Caco-2 (cell line): ENCODE measurements at regions of chr20 and their contacts with region 1.

Region 1: GRCh38 chr20:10673988-10674711 is at the start of gene JAG1:
- DNase-seq: peak; percentile 98 to 99
- H3K4me3 ChIP-seq: peak within 1 kb of the TSS; percentile 97
- H3K4me3 Mint-ChIP-seq: peak within 1 kb of the TSS; percentile 100
- H3K27ac Mint-ChIP-seq: peak within 1 kb of the TSS; percentile 98
- H3K4me1 ChIP-seq: peaks cover under 1% of the 10 kb centered on the region; the same call in 1 of the 2 replicates
- H3K4me1 Mint-ChIP-seq: peaks cover 14% of the 10 kb centered on the region
- H3K27me3 ChIP-seq: no peaks in the 10 kb centered on the region
- H3K27me3 Mint-ChIP-seq: peaks cover 2% of the 10 kb centered on the region
- CTCF ChIP-seq: no peak
- total RNA-seq, gene JAG1: 69.1 and 69.8 TPM in 2 replicates

Region 2: GRCh38 chr20:10434832-10435812 is 239.0 kb before region 1 on chr20 and contains the start of gene SLX4IP:
- CTCF ChIA-PET with region 1: no interaction called
- POLR2A ChIA-PET with region 1: no interaction called
- intact Hi-C with region 1: loop called (anchors 1 kb)
- DNase-seq: peak; percentile 94 to 97
- H3K4me3 ChIP-seq: peak within 1 kb of the TSS; percentile 98
- H3K4me3 Mint-ChIP-seq: peak within 1 kb of the TSS; percentile 99
- H3K27ac Mint-ChIP-seq: peak within 1 kb of the TSS; percentile 97
- H3K4me1 ChIP-seq: peaks cover 3% of the 10 kb centered on the region; the same call in 1 of the 2 replicates
- H3K4me1 Mint-ChIP-seq: peaks cover 10% of the 10 kb centered on the region
- H3K27me3 ChIP-seq: no peaks in the 10 kb centered on the region
- H3K27me3 Mint-ChIP-seq: no peaks in the 10 kb centered on the region
- CTCF ChIP-seq: no peak
- total RNA-seq, gene SLX4IP: 8.5 and 8.8 TPM in 2 replicates

Region 3: DNA sequence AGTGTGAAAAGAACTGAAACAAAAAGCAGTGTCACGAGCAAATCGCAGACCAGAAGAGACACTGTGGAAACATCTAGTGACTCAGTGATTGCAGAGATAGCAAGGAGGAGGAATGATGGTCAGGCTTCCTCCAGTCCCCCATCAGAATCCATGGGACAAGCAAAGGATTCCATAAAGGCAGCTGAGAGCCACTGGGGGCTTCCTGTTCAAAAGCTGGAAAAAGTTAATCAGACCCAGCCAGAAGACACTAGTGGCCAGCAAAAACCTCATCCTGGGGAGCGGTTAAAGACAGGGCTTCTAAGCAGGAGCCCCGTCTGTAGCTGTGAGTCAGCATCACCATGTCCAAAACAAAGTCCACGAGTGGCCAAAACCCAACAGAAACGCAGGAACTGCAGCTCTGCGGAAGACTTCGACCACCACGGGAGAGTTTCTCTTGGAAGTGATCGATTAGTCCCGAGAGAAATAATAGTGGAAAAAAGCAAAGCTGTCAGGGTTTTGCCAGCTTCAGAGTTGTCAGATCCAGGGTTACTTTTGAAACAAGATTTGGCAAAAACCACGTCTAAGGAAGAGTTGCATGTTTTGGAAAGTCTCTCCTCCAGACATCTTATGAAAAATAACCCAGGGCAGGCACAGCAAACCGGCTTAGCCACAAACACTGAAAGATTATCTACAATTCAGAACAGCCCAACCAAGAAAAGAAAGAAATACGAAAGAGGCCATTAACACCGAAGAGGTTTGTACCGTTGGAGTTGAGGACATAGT is 51.3 kb before region 1 on chr20:
- CTCF ChIA-PET with region 1: no interaction called
- POLR2A ChIA-PET with region 1: no interaction called
- intact Hi-C with region 1: no loop called
- DNase-seq: no peak
- H3K4me3 ChIP-seq: no peak overlapping the region
- H3K4me3 Mint-ChIP-seq: no peak overlapping the region
- H3K27ac Mint-ChIP-seq: no peak overlapping the region
- H3K4me1 ChIP-seq: no peaks in the 10 kb centered on the region
- H3K4me1 Mint-ChIP-seq: no peaks in the 10 kb centered on the region
- H3K27me3 ChIP-seq: no peaks in the 10 kb centered on the region
- H3K27me3 Mint-ChIP-seq: no peaks in the 10 kb centered on the region
- CTCF ChIP-seq: no peak

Region 4: DNA sequence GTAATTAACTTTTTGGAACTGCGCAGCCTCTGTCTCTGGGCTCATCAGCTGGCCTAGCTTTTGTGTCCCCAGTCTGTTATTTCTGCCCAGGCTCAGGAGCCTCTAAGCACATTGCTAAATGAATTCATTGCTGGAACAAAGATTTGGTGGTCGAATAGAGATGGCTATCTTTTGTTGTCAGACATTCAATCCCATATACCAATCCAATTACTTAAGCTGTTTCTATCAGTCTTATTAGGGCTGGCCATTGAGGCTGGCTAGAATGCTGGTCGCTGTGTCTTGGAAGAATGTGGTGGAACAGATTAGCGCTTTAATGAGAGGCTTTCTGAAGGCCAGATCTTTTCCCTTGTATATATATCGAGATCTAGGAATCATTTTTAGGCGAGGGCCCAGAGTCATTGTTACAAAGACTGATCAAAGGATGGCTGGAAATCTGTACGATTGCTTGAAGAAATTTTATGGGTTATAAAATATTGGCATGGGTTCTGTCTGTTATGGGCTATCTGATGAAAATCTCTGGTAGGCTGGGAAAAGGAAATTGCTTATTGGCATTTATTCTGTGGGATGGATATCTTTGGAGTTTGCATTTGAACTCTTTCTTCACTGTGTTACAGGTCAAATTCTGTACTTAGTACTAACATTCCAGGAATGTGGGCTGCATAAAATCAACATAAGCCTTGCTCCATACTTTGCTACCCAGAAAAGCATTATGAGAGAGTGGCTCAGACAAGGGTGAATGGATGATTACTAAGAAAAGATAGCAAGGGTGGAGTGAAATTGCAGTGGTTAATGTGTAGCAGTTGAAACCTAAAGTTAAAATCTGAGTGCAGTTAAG is 34.4 kb after region 1 on chr20:
- CTCF ChIA-PET with region 1: interaction called, 4 read pairs
- POLR2A ChIA-PET with region 1: interaction called, 3 read pairs
- intact Hi-C with region 1: loop called (anchors 1 kb)
- DNase-seq: peak in 1 of 2 experiments; percentile 55
- H3K4me3 ChIP-seq: no peak overlapping the region
- H3K4me3 Mint-ChIP-seq: peak overlapping the region; percentile 31
- H3K27ac Mint-ChIP-seq: peak overlapping the region; percentile 58
- H3K4me1 ChIP-seq: peaks cover 42% of the 10 kb centered on the region
- H3K4me1 Mint-ChIP-seq: peaks cover 30% of the 10 kb centered on the region
- H3K27me3 ChIP-seq: no peaks in the 10 kb centered on the region
- H3K27me3 Mint-ChIP-seq: no peaks in the 10 kb centered on the region
- CTCF ChIP-seq: no peak

Region 5: GRCh38 chr20:10864076-10864918 is 190.1 kb after region 1 on chr20:
- CTCF ChIA-PET with region 1: no interaction called
- POLR2A ChIA-PET with region 1: no interaction called
- intact Hi-C with region 1: no loop called
- DNase-seq: no peak
- H3K4me3 ChIP-seq: no peak overlapping the region
- H3K4me3 Mint-ChIP-seq: no peak overlapping the region
- H3K27ac Mint-ChIP-seq: peak overlapping the region; percentile 13
- H3K4me1 ChIP-seq: peaks cover 27% of the 10 kb centered on the region
- H3K4me1 Mint-ChIP-seq: no peaks in the 10 kb centered on the region
- H3K27me3 ChIP-seq: no peaks in the 10 kb centered on the region
- H3K27me3 Mint-ChIP-seq: no peaks in the 10 kb centered on the region
- CTCF ChIP-seq: no peak

Region 6: GRCh38 chr20:10954137-10954840 is 280.1 kb after region 1 on chr20:
- CTCF ChIA-PET with region 1: interaction called, 4 read pairs
- POLR2A ChIA-PET with region 1: no interaction called
- intact Hi-C with region 1: loop called (anchors 2 kb)
- DNase-seq: no peak
- H3K4me3 ChIP-seq: no peak overlapping the region
- H3K4me3 Mint-ChIP-seq: no peak overlapping the region
- H3K27ac Mint-ChIP-seq: no peak overlapping the region
- H3K4me1 ChIP-seq: peaks cover 50% of the 10 kb centered on the region
- H3K4me1 Mint-ChIP-seq: peaks cover 31% of the 10 kb centered on the region
- H3K27me3 ChIP-seq: no peaks in the 10 kb centered on the region
- H3K27me3 Mint-ChIP-seq: no peaks in the 10 kb centered on the region
- CTCF ChIP-seq: no peak

Region 7: DNA sequence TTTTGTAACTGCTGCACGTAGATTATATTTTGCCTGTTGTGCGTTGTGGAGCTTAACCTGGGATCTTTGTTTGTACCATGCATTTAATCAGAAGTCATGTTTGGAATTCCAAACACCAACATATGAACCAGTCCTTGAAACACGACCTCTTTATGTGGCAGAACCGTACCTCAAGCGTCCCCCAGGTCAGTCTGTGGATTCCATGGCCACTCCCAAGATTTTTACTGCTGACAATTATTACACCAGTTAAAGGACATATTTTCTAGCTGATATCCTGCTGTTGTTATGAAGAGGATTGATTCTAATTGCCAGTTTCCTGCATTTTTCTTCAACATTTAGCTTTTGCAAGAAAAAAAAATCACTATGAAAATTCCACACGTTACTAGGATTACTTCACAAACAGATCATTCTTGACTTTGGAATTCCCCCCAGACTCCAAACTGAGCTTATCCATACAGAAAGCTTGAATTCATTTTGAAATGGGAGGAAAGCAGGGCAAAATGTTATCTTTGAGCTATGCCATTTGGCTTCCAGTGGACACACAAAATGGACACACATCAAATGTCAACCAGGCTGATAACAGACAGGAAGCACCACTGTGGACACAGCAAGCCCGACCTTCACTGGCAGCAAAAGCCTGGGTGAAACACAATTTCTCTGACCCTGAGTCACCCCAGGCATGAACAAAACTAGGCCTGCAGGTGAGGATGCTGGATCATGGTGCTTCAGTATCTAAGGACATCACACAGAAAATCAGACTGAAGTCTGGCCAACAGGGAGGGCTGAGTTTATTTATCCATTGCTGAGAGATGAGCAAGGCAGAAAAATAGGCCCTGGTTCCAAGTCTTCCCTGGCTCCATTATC is 542.5 kb after region 1 on chr20:
- CTCF ChIA-PET with region 1: interaction called, 4 read pairs
- POLR2A ChIA-PET with region 1: no interaction called
- intact Hi-C with region 1: loop called (anchors 1 kb)
- DNase-seq: peak; percentile 58 to 86
- H3K4me3 ChIP-seq: no peak overlapping the region
- H3K4me3 Mint-ChIP-seq: peak overlapping the region; percentile 36
- H3K27ac Mint-ChIP-seq: peak overlapping the region; percentile 74
- H3K4me1 ChIP-seq: peaks cover 53% of the 10 kb centered on the region
- H3K4me1 Mint-ChIP-seq: peaks cover 38% of the 10 kb centered on the region
- H3K27me3 ChIP-seq: no peaks in the 10 kb centered on the region
- H3K27me3 Mint-ChIP-seq: no peaks in the 10 kb centered on the region
- CTCF ChIP-seq: no peak

Region 8: GRCh38 chr20:11544029-11544678 is 870.0 kb after region 1 on chr20:
- CTCF ChIA-PET with region 1: no interaction called
- POLR2A ChIA-PET with region 1: no interaction called
- intact Hi-C with region 1: loop called (anchors 1 kb)
- DNase-seq: peak in 1 of 2 experiments; percentile 73
- H3K4me3 ChIP-seq: no peak overlapping the region
- H3K4me3 Mint-ChIP-seq: no peak overlapping the region
- H3K27ac Mint-ChIP-seq: no peak overlapping the region
- H3K4me1 ChIP-seq: peaks cover 13% of the 10 kb centered on the region
- H3K4me1 Mint-ChIP-seq: no peaks in the 10 kb centered on the region
- H3K27me3 ChIP-seq: no peaks in the 10 kb centered on the region
- H3K27me3 Mint-ChIP-seq: no peaks in the 10 kb centered on the region
- CTCF ChIP-seq: peak; percentile 48 to 73